ENCODE measurements at regions of chr3 and their contacts with region 1.

Region 1: DNA sequence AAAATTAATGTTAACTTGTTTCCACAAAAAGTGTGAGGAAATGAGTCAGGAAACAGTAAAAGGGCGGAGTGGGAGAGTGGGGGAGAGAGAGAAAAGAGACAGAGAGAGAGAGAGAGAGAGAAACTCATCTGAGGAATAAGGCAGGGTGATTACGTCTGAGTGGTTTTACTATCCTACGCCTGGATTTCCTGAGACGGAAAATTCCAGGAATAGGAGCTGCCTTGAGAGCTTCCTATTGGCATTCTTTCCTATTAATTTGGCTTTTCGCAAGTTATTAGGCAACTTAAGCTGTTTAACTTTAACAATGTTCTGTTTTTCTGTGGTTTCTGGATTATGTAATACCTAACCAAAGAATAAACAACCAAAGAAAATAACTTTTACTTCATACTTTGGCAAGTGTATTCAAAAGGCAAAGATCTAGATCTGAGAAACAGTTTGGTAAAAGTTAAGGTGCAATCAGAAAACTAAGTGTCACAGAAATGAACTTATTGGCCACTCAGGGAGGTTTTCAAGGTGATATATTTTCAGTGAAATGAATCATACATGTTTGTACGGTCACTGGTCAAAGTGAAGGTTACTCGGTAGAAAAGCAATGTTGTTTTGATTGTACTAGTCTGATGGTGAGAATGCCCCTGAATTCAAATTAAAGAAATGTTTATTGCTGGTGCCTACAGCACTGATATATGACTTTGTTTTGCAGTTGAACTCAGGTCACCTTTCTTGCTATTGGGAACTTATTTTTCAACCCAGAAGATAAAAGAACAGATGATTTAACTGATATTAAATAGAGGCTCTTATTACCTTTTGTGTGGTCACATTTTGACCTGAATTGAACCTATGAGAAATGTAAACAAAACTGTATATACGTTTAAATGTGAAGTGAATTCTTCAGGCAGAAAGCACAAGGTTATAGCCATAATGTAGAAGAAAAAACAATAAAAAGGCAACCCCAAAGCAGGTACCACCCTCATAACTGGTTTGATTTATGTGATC is 39.9 kb upstream of the TNFSF10 start:
- DNase-seq: no peak
- ATAC-seq: peak; percentile 83
- H3K4me3 ChIP-seq: no peak overlapping the region
- H3K27ac ChIP-seq: no peak overlapping the region
- H3K4me1 ChIP-seq: peaks cover 9% of the 10 kb centered on the region
- H3K27me3 ChIP-seq: no peaks in the 10 kb centered on the region
- CTCF ChIP-seq: no peak
- EP300 ChIP-seq: no peak
- POLR2A ChIP-seq: no peak
- RAD21 ChIP-seq: no peak

Region 2: GRCh38 chr3:172355839-172356238 is 207.3 kb before region 1 on chr3:
- CTCF ChIA-PET with region 1: no interaction called
- POLR2A ChIA-PET with region 1: no interaction called
- RAD21 ChIA-PET with region 1: no interaction called
- SMC1A ChIA-PET with region 1: no interaction called
- in situ Hi-C with region 1: no loop called
- intact Hi-C with region 1: no loop called
- DNase-seq: no peak
- ATAC-seq: no peak
- H3K4me3 ChIP-seq: no peak overlapping the region
- H3K27ac ChIP-seq: no peak overlapping the region
- H3K4me1 ChIP-seq: no peaks in the 10 kb centered on the region
- H3K27me3 ChIP-seq: no peaks in the 10 kb centered on the region
- CTCF ChIP-seq: no peak
- EP300 ChIP-seq: no peak
- POLR2A ChIP-seq: no peak
- RAD21 ChIP-seq: no peak

Region 3: GRCh38 chr3:172580680-172581401 is 17.7 kb after region 1 on chr3:
- CTCF ChIA-PET with region 1: no interaction called
- POLR2A ChIA-PET with region 1: no interaction called
- RAD21 ChIA-PET with region 1: interaction called, 3 read pairs
- SMC1A ChIA-PET with region 1: interaction called, 3 read pairs
- in situ Hi-C with region 1: no loop called
- intact Hi-C with region 1: loop called (anchors 1 kb)
- DNase-seq: no peak
- ATAC-seq: peak; percentile 88
- H3K4me3 ChIP-seq: no peak overlapping the region
- H3K27ac ChIP-seq: peak overlapping the region; percentile 3; the same call in 1 of the 2 replicates
- H3K4me1 ChIP-seq: peaks cover 27% of the 10 kb centered on the region
- H3K27me3 ChIP-seq: no peaks in the 10 kb centered on the region
- CTCF ChIP-seq: no peak
- EP300 ChIP-seq: peak in 1 of 2 experiments; percentile 26; a peak in 1 of 4 replicates
- POLR2A ChIP-seq: no peak
- RAD21 ChIP-seq: no peak